Transverse colon (tissue), 4 donors: ENCODE measurements at regions of chr10 and their contacts with region 1.

Region 1: DNA sequence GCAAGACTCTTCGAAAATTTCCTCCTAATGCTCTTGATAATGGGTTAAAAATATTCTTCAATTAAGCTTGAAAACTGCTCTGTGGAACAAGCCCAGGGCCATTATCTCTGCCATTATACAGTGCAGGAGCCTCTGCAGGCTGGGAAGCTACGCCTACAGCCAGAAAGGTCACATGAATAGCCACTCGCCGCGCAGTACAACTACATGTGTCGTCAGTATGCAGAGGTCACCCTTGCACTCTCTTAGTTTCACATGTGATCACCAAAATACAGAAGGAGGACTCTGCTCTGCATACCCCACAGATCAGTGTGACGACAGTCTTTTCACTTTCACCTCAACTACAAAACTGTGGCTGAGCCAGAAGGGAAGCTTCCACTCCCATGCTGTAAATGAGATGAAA is 141.8 kb upstream of the C1QL3 start:
- DNase-seq: no peak
- H3K4me3 ChIP-seq: no peak overlapping the region
- H3K27ac ChIP-seq: no peak overlapping the region
- H3K4me1 ChIP-seq: no peaks in the 10 kb centered on the region
- H3K27me3 ChIP-seq: no peaks in the 10 kb centered on the region
- CTCF ChIP-seq: no peak
- EP300 ChIP-seq: no peak
- POLR2A ChIP-seq: no peak

Region 2: DNA sequence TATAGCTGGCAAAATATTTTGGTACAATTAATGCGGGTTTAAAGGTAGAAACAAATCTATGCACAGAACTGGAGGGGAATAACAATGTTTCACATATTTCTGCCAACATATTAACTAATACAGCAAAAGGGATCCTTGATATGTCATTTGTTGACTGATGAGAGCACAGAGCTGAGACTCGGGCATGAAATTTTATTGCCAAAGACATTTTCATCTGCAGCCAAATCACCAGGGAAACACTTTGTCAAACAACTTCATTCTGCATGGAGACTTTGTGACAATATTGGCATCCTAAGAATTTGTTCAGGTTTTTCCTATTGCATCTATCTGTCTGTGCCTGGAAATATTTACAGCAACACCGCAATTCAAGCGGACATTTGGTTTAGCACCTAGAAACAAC is 24.0 kb before region 1 on chr10:
- in situ Hi-C with region 1: no loop called
- intact Hi-C with region 1: loop called (anchors 1 kb)
- DNase-seq: no peak
- H3K4me3 ChIP-seq: no peak overlapping the region
- H3K27ac ChIP-seq: no peak overlapping the region
- H3K4me1 ChIP-seq: no peaks in the 10 kb centered on the region
- H3K27me3 ChIP-seq: no peaks in the 10 kb centered on the region
- CTCF ChIP-seq: no peak
- EP300 ChIP-seq: no peak
- POLR2A ChIP-seq: no peak